H1 (cell line): ENCODE measurements at regions of chr6 and their contacts with region 1.

Region 1: DNA sequence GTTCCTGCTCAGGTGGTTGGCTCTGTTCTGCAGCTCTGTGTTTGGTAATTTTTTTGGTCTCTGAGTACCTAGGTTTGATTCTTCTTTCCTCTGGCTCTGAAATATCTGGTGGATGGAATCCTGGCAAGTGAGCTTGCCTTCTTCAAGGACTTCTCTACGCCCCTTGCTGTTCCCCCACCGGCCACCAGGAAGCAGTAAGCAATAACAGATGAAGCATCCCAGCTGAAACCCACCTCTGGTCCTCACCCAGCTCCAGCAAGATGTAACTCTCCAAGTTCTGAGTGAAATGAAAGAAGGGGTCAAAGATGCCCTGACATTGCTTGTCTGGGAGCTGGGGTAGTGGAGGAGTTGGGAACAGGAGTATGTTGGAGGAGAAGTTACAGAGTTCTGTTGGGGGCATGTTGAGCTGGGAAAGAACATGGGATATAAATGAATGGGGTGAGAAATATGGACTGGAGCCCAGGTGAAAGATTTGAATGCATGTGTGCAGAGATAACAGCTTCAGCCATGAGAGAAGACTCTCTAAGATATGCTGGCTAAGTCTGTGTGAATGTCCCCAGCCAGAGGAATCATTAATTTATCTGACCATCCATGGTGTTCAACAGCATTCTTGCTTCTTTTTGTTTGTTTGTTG is 51.3 kb upstream of the GLP1R start:
- DNase-seq: peak; percentile 23 to 82
- H3K4me3 ChIP-seq: no peak overlapping the region
- H3K27ac ChIP-seq: no peak overlapping the region
- H3K4me1 ChIP-seq: no peaks in the 10 kb centered on the region
- H3K27me3 ChIP-seq: no peaks in the 10 kb centered on the region
- CTCF ChIP-seq: peak; percentile 88 to 94 (median 93)
- EP300 ChIP-seq: no peak
- POLR2A ChIP-seq: no peak
- RAD21 ChIP-seq: peak; percentile 96 to 97

Region 2: DNA sequence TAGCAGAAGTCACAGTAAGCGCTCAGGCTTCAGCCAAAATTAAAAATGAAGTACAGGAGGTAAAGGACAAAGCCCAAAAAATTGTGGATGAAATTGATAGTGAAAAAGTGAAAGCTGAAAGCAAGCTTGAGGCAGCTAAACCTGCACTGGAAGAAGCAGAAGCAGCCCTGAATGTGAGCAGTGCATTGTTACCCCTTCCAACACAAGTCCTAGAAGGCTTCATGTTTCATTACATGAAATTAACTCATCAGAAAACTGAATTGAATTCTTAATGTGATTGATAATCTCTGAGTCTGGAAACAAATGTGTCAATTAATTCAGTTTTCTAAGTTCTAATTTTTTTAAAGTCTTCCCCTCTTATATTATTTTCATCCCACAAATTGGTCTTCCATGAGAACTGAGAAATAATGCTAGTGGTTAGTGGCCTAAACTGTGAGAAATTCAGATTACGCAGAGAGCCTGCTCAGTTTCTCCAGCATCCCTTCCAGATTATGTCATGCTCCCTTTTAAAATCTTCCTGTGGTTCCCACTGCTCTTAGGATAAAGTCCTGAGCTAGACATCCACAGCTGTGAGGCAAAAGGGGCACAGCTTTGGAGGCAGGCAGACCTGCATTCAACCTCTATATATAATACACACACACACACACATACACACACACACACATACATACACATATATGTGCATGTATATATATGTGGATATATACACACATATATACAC is 81.9 kb before region 1 on chr6:
- CTCF ChIA-PET with region 1: no interaction called
- POLR2A ChIA-PET with region 1: no interaction called
- DNase-seq: no peak
- H3K4me3 ChIP-seq: no peak overlapping the region
- H3K27ac ChIP-seq: no peak overlapping the region
- H3K4me1 ChIP-seq: no peaks in the 10 kb centered on the region
- H3K27me3 ChIP-seq: no peaks in the 10 kb centered on the region
- CTCF ChIP-seq: no peak
- EP300 ChIP-seq: no peak
- POLR2A ChIP-seq: no peak
- RAD21 ChIP-seq: no peak

Region 3: DNA sequence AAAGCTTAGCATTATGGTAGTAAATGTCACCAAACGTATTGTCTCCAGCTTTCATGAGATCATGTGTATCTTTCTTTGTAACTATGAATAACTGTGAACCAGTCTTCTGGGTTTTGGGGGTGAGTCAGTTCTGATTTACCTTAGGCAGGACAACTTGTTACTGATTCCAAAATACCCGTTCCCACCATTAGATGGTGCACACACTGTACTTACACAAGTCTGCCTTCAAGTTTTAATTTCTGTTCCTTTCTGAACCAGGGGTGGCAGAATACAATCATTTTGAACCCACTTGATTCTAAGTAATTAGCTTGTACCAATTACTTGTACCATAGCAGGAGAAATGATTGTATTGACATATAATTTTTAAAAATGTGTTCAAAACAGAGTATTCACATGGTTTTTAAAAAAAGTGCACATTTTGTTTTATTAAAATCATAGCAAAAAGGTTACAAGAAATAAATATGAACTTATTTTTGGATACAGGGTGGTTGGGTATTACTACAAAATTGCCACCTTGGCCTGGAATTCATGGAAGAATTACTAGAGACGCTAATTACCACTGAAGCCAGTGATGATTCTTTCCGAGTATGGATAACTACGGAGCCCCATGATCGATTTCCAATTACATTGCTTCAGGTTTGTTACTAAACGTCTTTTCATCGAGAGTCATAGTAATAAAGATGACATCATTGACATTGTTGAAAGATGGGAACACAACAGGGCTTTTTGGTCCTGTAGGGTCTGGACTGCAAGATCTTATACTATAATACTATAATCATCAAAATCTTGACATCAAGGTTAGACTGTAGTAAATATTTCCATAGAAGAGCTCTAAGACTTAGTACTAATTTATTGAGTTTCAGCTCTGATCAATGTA is 23.8 kb before region 1 on chr6:
- CTCF ChIA-PET with region 1: interaction called, 50 read pairs
- POLR2A ChIA-PET with region 1: no interaction called
- DNase-seq: no peak
- H3K4me3 ChIP-seq: no peak overlapping the region
- H3K27ac ChIP-seq: no peak overlapping the region
- H3K4me1 ChIP-seq: peaks cover 0 to 3% (median 2%) of the 10 kb centered on the region in 4 experiments; a peak in 4 of 7 replicates
- H3K27me3 ChIP-seq: no peaks in the 10 kb centered on the region
- CTCF ChIP-seq: peak in 2 of 3 experiments; percentile 68 to 92; a peak in 3 of 4 replicates
- EP300 ChIP-seq: no peak
- POLR2A ChIP-seq: no peak
- RAD21 ChIP-seq: peak; percentile 71 to 77

Region 4: DNA sequence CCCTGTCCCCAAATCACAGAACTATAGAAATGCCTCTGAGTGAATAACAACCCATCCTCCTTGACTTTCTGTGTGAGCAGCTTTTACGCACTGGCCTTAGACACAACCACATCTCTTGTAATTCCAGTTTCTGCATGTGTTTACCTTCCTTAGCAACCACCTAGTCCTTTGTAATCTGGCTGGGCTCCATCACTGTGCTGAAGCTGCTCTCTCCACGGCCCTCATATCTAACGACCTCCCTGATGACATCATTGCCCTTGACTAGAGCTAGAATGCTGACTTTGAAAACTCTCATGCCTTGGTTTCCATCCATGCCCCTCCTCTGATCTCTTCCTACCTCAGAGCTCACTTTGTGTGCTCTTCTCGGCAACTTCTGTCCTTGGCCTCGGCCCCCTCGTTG is 20.9 kb after region 1 on chr6:
- CTCF ChIA-PET with region 1: interaction called, 22 read pairs
- POLR2A ChIA-PET with region 1: no interaction called
- DNase-seq: no peak
- H3K4me3 ChIP-seq: no peak overlapping the region
- H3K27ac ChIP-seq: no peak overlapping the region
- H3K4me1 ChIP-seq: no peaks in the 10 kb centered on the region
- H3K27me3 ChIP-seq: no peaks in the 10 kb centered on the region; a peak in 2 of 7 replicates
- CTCF ChIP-seq: no peak
- EP300 ChIP-seq: no peak
- POLR2A ChIP-seq: no peak
- RAD21 ChIP-seq: no peak

Region 5: GRCh38 chr6:39088331-39088730 is 91.1 kb after region 1 on chr6:
- CTCF ChIA-PET with region 1: interaction called, 153 read pairs
- POLR2A ChIA-PET with region 1: no interaction called
- DNase-seq: peak in 1 of 2 experiments; percentile 50
- H3K4me3 ChIP-seq: peak overlapping the region in 1 of 4 experiments; percentile 5; a peak in 2 of 8 replicates
- H3K27ac ChIP-seq: no peak overlapping the region
- H3K4me1 ChIP-seq: peaks cover 10 to 35% (median 12%) of the 10 kb centered on the region in 4 experiments
- H3K27me3 ChIP-seq: no peaks in the 10 kb centered on the region
- CTCF ChIP-seq: peak; percentile 56 to 73 (median 67)
- EP300 ChIP-seq: no peak; a peak in 1 of 3 replicates
- POLR2A ChIP-seq: no peak
- RAD21 ChIP-seq: peak; percentile 61 to 74

Region 6: DNA sequence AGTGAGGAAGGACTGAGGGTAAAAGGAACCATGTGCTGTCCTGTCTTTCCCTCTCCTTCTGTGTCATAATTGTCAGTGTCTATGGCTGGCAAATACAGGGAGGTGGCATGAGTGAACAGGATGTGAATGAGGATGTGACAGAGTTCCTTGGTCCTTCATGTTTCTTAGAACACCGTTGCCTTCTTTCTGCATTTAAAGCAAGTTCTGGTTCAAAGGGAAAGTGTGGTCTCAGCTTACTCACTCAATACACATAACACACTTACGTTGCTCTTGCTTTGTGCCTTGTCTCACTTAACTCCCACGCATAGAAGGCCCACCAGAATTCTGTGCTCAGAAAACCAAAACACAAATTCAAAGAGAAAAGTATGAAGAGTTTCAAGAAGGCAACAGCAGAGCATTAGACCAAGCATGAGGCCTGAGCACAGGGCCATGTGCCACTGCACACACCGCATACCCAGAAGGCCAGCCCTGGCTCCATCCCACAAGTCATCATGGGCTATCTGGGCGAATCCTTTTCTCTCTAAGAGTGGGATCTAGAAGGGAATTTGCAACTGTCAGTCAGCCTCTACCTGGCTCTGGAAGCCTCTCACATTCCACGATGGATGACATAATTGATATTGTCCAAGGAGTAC is 156.6 kb after region 1 on chr6:
- CTCF ChIA-PET with region 1: interaction called, 15 read pairs
- POLR2A ChIA-PET with region 1: no interaction called
- DNase-seq: no peak
- H3K4me3 ChIP-seq: no peak overlapping the region
- H3K27ac ChIP-seq: no peak overlapping the region
- H3K4me1 ChIP-seq: no peaks in the 10 kb centered on the region
- H3K27me3 ChIP-seq: no peaks in the 10 kb centered on the region
- CTCF ChIP-seq: no peak
- EP300 ChIP-seq: no peak
- POLR2A ChIP-seq: no peak
- RAD21 ChIP-seq: no peak

Region 7: GRCh38 chr6:39302669-39303424 is 305.6 kb after region 1 on chr6:
- CTCF ChIA-PET with region 1: interaction called, 26 read pairs
- POLR2A ChIA-PET with region 1: no interaction called
- DNase-seq: peak; percentile 73 to 97
- H3K4me3 ChIP-seq: no peak overlapping the region
- H3K27ac ChIP-seq: no peak overlapping the region
- H3K4me1 ChIP-seq: peaks cover 0 to 4% (median under 1%) of the 10 kb centered on the region in 4 experiments; a peak in 2 of 7 replicates
- H3K27me3 ChIP-seq: no peaks in the 10 kb centered on the region; a peak in 1 of 7 replicates
- CTCF ChIP-seq: peak; percentile 95 to 98 (median 97)
- EP300 ChIP-seq: no peak
- POLR2A ChIP-seq: no peak
- RAD21 ChIP-seq: peak; percentile 96 to 98